ENCODE measurements at regions of chr1 and their contacts with region 1.

Region 1: DNA sequence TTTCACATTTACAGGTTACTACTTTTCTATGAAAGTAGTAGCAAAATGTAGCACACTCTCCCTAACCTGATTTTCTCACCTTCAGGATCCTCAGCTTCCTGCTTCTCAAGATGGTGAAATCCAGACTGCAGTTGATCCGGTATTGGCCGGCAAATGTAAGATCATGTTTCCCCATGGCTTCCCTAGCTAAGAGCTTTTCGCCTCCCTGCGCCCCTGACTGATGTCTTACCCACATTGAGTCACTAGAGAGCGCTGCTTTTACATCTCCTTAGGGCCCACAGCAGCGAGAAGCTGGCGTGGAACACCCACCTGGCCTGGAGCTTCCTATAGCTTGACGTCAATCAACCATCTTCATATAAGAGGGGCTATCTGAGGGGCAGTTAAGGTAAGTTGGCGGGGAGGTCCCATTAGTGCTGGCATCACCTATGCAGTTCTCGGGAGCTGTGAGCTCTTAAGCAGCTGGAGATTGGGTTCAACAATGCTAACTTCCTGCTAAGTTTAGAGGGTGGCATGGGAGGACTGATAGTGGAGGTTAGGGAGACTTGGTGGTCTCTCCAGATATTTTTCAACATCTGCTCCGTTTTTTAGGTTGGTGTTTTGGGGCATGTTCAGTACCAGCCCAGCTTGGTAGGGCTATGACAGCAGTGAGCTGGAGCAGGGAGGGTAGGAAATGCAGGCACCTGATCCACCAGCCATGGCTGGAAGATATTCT is 5.5 kb downstream of the PTPN7 start:
- DNase-seq: peak; percentile 74
- ATAC-seq: peak; percentile 88
- H3K4me3 Mint-ChIP-seq: no peak overlapping the region
- H3K27ac Mint-ChIP-seq: peak overlapping the region; percentile 89
- H3K4me1 Mint-ChIP-seq: peaks cover 22% of the 10 kb centered on the region
- H3K27me3 Mint-ChIP-seq: no peaks in the 10 kb centered on the region
- CTCF ChIP-seq: peak; percentile 56

Region 2: DNA sequence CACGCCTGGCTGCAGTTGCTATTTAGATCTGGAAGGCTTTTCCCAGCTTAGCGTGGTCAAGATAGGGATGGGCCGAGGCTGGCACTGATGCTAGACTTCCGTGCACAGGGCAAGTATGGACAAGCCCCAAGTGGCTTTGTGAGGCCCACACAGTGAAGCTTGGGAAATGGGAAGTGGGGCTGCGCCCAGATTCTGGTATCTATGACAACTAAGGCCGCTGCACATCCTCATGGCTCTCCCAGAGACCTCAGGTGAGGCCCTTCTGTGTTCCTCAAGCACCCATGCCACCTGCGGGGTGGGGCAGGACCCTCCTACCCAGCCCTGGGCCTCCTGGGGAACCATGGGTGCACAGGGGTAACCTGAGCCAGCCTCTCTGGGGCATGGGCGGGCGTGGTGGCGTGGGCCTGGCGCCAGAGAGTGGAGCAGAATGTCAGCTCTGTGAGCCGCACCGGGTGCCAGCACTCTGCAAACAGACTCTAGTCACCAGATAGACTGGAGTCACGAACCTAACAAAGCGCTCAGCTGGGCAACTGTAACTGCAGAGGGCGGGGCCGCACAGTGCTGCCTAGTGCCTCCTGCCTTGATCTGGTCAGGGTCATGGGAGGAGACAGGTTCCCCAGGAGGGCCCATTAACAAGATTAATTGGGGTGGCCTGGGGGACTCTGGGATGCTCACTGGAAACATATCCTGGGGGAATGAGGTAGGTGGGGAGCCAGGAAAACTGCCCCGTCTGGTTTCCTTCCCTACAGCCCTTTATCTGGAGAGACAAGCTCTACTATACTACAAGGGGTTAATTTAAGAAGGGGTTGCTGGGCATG is 98.1 kb before region 1 on chr1:
- CTCF ChIA-PET with region 1: no interaction called
- POLR2A ChIA-PET with region 1: no interaction called
- DNase-seq: peak; percentile 20
- ATAC-seq: peak; percentile 73
- H3K4me3 Mint-ChIP-seq: no peak overlapping the region
- H3K27ac Mint-ChIP-seq: no peak overlapping the region
- H3K4me1 Mint-ChIP-seq: peaks cover 10% of the 10 kb centered on the region; the same call in 1 of the 2 replicates
- H3K27me3 Mint-ChIP-seq: peaks cover 2% of the 10 kb centered on the region; the same call in 1 of the 2 replicates
- CTCF ChIP-seq: no peak

Region 3: GRCh38 chr1:202122639-202123335 is 32.1 kb before region 1 on chr1 and contains the start of gene GPR37L1:
- CTCF ChIA-PET with region 1: interaction called, 14 read pairs
- POLR2A ChIA-PET with region 1: no interaction called
- DNase-seq: peak; percentile 83
- ATAC-seq: peak; percentile 82
- H3K4me3 Mint-ChIP-seq: no peak within 1 kb of the TSS
- H3K27ac Mint-ChIP-seq: no peak within 1 kb of the TSS
- H3K4me1 Mint-ChIP-seq: peaks cover 9% of the 10 kb centered on the region
- H3K27me3 Mint-ChIP-seq: no peaks in the 10 kb centered on the region; the same call in 1 of the 2 replicates
- CTCF ChIP-seq: no peak
- total RNA-seq, gene GPR37L1: 0.07 to 0.16 TPM (median 0.09 TPM) in 3 replicates

Region 4: GRCh38 chr1:202144402-202145067 is 10.4 kb before region 1 on chr1 and contains the start of gene ARL8A:
- CTCF ChIA-PET with region 1: interaction called, 26 read pairs
- POLR2A ChIA-PET with region 1: interaction called, 6 read pairs
- DNase-seq: peak; percentile 73
- ATAC-seq: peak; percentile 50
- H3K4me3 Mint-ChIP-seq: peak within 1 kb of the TSS; percentile 83
- H3K27ac Mint-ChIP-seq: peak within 1 kb of the TSS; percentile 71
- H3K4me1 Mint-ChIP-seq: peaks cover 16% of the 10 kb centered on the region
- H3K27me3 Mint-ChIP-seq: peaks cover 7% of the 10 kb centered on the region
- CTCF ChIP-seq: no peak
- total RNA-seq, gene ARL8A: 47.2 to 58.5 TPM (median 50.9 TPM) in 3 replicates

Region 5: DNA sequence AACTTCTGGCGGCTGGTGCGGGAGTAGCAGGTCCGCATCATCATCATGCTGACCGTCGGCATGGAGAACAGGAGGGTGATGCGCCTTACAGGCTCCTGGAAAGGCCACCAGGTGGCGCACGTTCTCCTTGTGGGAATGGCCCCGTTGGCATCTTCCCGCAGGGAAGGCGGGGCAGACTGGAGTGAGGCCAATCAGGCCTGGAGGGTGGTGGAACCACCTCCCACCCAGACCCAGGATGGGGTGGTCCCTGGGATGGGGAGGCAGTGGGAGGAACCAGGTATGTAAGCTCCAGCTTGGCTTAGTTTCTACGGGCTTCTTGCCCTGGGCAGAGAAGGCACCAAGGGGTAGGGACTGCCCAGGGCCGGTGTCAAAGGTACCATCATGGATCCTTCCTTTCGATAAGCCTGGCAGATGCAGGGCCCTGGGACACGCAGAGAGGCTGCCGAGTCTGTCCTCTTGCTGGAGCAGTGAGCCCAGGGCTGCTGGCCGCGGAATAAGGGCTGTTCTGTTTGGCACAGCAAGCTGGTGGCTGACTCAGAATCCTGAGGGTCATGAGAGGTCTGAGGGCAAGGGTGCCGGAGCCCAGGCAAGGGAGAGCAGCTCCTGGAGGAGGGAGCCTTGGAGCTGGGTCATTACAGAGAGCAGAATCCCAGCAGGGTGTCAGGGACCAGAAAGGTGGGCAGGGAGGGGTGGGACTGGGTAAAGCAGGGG is 30.0 kb after region 1 on chr1:
- CTCF ChIA-PET with region 1: interaction called, 32 read pairs
- POLR2A ChIA-PET with region 1: no interaction called
- DNase-seq: peak; percentile 98
- ATAC-seq: peak; percentile 94
- H3K4me3 Mint-ChIP-seq: peak overlapping the region; percentile 38
- H3K27ac Mint-ChIP-seq: 0 out of 2 replicates have a peak overlapping the region, but pooled peaks have one; percentile 78
- H3K4me1 Mint-ChIP-seq: peaks cover 13% of the 10 kb centered on the region
- H3K27me3 Mint-ChIP-seq: peaks cover 4% of the 10 kb centered on the region; the same call in 1 of the 2 replicates
- CTCF ChIP-seq: peak; percentile 85

Region 6: GRCh38 chr1:202315576-202316168 is 160.8 kb after region 1 on chr1:
- CTCF ChIA-PET with region 1: interaction called, 10 read pairs
- POLR2A ChIA-PET with region 1: no interaction called
- DNase-seq: peak; percentile 90
- ATAC-seq: peak; percentile 97
- H3K4me3 Mint-ChIP-seq: no peak overlapping the region
- H3K27ac Mint-ChIP-seq: no peak overlapping the region
- H3K4me1 Mint-ChIP-seq: peaks cover 15% of the 10 kb centered on the region
- H3K27me3 Mint-ChIP-seq: no peaks in the 10 kb centered on the region
- CTCF ChIP-seq: peak; percentile 74; the same call in 1 of the 2 replicates